Posterior cingulate gyrus (tissue), 11 donors: ENCODE measurements at regions of chr18 and their contacts with region 1.

Region 1: GRCh38 chr18:55234366-55235093 is 275.3 kb upstream of the CCDC68 start:
- DNase-seq: peak; percentile 55 to 96 (median 84)

Region 2: DNA sequence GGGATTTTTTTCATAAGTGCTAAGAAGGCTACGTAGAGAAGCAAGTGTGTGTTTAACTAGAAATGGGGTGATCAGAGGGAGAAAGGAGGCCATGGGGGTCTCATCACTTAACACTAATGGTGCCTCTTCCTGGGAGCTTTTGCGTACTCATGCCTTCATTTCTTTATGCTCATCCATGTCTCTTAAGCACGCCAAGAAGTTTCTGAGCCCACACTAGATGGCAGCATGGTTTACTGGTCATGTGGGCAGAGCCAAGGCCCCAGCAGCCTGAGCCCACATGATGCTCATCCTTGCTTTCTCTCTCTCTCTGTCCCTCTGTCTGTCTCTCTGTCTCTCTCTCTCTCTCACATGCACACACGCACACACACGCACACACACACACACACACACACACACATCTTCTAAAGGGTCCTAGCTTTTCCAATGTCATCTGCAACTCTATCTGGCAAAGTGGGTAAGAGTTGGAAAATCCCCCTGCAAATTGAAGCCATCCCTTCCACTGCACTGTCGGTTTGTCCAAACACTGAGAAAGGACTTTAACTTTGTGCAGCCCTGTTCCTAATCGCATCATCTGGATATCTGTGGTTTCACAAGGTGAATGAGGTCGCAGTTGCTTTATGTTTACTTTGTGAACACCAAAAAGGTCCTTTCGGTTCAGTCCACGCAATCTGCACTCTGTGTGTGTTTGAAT is 138.1 kb before region 1 on chr18:
- intact Hi-C with region 1: loop called (anchors 5 kb)
- DNase-seq: peak in 9 of 10 donors; percentile 34 to 90 (median 57)

Region 3: GRCh38 chr18:55141318-55141717 is 93.2 kb before region 1 on chr18:
- intact Hi-C with region 1: no loop called
- DNase-seq: peak in 1 of 10 donors; percentile 61

Region 4: GRCh38 chr18:55337908-55338521 is 103.5 kb after region 1 on chr18:
- intact Hi-C with region 1: loop called (anchors 5 kb)
- DNase-seq: peak in 8 of 10 donors; percentile 18 to 87 (median 48)

Region 5: DNA sequence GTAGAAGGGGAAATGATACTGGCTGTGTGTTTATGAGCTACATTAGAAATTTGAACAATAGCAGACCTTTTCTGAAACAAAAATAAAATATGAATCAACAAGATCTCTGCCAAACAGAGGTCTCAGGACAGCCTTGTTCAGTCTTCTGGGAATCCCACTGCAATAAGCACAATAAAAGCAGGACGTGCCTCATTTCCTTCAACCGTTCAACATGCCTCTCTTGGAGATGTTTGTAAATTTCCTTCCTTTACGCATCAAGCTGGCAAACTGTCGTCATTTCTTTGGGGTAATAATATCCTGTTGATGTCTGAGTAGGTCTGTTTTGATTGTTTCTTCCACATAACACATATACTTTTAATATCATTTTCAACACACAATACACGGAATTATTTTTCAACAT is 276.3 kb after region 1 on chr18:
- intact Hi-C with region 1: no loop called
- DNase-seq: no peak

Region 6: DNA sequence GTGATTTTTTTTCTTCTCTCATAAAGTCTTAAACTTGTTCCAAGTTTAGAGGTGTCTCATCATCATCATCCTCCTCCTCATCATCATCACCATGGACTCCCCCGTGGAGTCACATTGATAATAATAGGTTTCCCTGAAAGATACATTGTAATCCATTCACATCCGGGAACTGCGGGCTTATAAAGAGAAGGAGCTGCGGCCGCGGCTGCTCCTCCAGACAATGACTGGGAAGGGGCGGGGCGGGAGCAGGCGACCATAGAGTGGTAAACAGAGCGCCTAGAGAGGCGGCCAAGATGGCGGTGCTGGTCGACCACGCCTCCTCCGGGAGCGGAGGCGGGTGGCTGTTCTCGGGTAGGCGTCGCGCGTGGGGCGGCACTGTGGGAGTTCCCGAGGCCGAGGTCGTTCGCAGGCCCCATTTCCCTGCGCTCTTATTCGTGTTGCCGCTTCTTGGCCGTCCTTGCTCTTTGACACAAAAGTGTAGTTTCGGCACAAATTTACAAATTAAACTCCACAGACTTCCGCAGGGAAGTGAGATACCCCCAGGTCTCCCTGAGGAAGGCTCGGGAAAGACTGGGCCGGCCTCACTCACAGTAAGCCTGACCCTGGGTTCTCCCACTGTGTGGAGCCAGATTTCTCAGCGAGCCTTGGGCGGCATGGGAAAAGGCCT is 355.2 kb after region 1 on chr18:
- intact Hi-C with region 1: loop called (anchors 5 kb)
- DNase-seq: peak; percentile 89 to 99 (median 93)

Region 7: GRCh38 chr18:56575819-56576663 is 1341.5 kb after region 1 on chr18:
- intact Hi-C with region 1: loop called (anchors 5 kb)
- DNase-seq: no peak